Ascending aorta (tissue), 2 donors: ENCODE measurements at regions of chr3 and their contacts with region 1.

Region 1: DNA sequence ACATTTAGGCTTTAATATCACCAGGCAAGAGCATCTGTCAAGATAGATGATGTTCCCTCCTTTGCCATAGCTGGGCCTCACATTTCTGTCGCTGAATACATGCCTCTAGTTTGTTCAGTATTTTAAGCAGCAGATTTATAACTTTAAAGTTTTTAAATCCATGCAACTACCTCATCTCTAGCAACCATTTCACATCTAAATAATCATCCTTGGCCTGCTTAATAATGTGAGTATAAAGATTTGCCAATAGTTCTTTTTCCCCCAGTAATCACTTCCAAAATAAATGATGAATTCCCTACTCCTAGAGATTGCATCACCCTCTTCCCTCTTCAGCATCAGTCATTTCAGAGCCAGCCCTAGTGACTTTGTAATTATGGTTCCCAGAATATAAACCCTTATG is 36.2 kb upstream of the FILIP1L start:
- DNase-seq: no peak
- H3K4me3 ChIP-seq: no peak overlapping the region
- H3K27ac ChIP-seq: peak overlapping the region; percentile 92
- H3K4me1 ChIP-seq: peaks cover 10 to 28% of the 10 kb centered on the region in 2 donors
- H3K27me3 ChIP-seq: no peaks in the 10 kb centered on the region
- CTCF ChIP-seq: no peak

Region 2: GRCh38 chr3:100068826-100069225 is 81.6 kb before region 1 on chr3:
- intact Hi-C with region 1: no loop called
- DNase-seq: peak; percentile 54 to 93
- H3K4me3 ChIP-seq: peak overlapping the region in 1 of 2 donors; percentile 25
- H3K27ac ChIP-seq: peak overlapping the region; percentile 87 to 92
- H3K4me1 ChIP-seq: peaks cover 3 to 22% of the 10 kb centered on the region in 2 donors
- H3K27me3 ChIP-seq: no peaks in the 10 kb centered on the region
- CTCF ChIP-seq: peak; percentile 65 to 80 (median 78)

Region 3: DNA sequence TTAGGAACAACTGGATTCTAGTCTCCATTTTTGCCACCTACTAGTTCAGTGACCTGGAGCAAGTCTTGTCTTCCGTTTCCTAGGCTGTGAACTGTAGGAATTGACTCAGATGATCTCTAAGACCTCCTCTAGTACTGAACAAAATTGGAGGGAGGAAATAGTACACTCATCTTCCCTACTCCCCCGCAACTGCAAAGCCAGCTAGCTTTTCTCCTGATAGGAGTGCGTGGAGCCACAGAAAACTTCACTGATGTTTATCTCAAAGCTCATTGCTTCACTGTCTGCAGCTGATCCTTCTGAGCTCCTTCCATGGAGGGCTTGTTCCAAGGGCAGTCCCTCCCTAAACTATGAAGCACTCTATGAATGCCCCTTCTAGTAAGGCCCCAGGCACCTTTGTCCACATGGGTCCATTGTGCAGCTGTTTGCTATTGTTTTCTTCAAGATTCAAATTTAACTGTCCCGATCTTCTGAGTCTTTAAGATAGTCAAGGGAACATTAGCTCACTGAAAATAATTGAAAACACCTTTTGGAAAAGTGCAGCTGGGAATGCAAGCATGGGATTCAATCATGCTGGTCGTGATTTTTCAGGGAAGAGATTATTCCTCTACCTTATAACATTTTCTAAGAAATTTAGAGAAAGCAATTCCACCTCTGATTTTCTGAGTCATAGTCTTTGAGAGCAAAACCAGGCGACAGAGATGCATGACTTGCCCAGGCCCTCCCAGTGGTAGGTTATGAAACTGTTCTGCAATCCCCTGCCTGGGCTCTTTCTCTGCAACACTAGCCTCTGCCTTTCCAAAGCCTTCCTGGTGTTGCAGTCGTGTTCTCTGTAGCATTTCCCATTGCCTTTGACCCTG is 60.4 kb before region 1 on chr3:
- intact Hi-C with region 1: loop called (anchors 5 kb)
- DNase-seq: no peak
- H3K4me3 ChIP-seq: no peak overlapping the region
- H3K27ac ChIP-seq: peak overlapping the region in 1 of 2 donors; percentile 33
- H3K4me1 ChIP-seq: peaks cover 0 to 20% of the 10 kb centered on the region in 2 donors
- H3K27me3 ChIP-seq: no peaks in the 10 kb centered on the region
- CTCF ChIP-seq: peak; percentile 15 to 31 (median 29)